Head of caudate nucleus (tissue), 42 donors: ENCODE measurements at regions of chr3 and their contacts with region 1.

Region 1: GRCh38 chr3:136752422-136753325 is 496 bp upstream of the STAG1 start:
- DNase-seq: peak; percentile 95 to 100 (median 99)

Region 2: GRCh38 chr3:136196401-136197158 is 556.1 kb before region 1 on chr3:
- intact Hi-C with region 1: loop called (anchors 5 kb)
- DNase-seq: peak; percentile 93 to 99 (median 97)

Region 3: DNA sequence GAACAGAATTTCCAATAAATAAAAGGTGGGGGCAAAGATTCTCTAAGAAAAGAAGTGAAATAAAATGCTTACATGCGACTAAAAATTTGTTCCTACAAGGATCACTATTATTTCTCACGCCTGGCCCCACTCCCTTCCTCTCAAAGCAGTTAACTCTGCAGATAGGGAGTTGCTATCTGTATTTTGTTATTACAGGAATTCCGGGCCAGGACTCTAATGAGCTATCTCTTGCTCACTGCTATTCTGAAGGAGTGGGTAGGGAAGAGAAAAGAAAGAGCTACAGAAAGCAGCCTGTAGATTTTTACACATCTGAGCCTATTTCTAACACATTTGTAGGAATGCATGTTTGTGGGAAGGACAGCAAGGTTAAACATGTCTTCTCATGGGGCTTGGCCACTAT is 362.1 kb before region 1 on chr3:
- intact Hi-C with region 1: loop called (anchors 5 kb)
- DNase-seq: no peak

Region 4: DNA sequence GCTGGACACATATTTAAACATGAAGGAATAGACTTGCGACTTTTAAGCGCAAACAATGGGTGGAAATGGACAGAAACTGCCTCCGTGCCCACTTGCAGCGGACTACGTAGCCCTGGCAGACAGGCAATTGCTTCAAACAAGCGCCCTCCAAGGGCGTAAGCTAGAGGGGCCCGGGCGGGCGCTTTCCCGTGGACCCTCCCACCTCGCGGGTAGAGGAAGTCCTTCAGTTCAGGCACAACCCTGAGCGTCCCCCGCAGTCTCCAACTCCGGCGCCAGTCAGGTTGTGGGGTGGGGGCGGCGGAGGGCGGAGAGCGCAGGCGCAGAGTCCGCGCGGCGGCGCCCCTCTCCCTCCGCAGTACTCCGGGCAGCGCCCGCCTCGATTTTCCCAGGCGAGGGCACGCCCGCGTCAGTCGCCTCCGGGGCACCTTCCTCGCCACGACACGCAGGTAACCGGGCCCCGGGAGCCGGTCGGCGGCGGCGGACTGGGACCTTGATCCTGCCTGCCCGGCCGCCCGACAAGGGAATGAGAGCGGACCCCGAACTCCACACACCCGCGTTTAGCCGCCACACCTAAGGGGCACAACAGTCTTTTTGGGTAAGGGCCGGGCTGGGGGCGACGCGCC is 66.2 kb after region 1 on chr3 and contains the start of gene SLC35G2:
- intact Hi-C with region 1: loop called (anchors 2 kb)
- DNase-seq: peak; percentile 37 to 85 (median 70)

Region 5: GRCh38 chr3:137013955-137014688 is 261.4 kb after region 1 on chr3:
- intact Hi-C with region 1: loop called (anchors 2 kb)
- DNase-seq: peak; percentile 74 to 98 (median 94)